ENCODE measurements at regions of chr5 and their contacts with region 1.

Region 1: DNA sequence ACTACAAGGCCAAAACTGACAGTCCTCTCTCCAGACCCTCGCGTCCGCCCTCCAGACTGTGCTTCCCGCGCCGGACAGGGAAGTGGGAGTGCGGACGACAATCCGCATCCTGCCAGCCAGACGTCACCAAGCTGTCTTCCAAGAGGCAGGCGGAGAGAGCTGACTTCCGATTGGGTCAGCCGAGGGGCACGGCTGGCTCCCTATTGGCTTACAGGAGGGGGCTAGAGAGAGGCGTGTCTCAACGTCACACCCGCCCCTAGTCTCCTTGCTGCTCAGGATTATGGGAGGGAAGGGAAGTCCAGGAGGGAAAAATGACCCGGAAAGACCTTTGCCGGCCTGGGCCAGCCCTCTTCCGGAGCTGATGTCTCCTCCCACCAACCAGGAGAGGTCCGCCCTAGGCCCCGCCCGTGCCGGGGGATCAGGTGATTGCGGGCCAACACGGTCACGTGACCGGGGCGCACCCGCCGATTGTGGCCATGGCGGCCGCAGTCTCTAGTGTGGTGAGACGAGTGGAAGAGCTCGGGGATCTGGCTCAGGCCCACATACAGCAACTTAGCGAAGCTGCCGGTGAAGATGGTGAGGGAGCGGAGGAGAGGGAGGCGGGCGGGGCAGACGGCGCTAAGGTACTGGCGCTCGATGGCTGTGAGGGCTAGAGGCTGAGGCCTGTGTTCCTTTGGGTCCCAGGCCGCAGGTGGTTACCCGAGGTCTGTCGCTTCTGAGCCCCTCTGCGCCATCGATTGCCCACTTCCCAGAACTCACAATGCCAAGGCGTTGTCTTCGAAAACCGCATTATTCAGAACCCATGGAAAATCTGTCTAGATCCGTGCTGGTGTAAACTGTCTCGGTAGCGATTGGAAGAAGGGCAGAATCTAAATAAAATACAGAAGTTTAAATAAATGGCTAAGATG is at the start of gene RIMOC1:
- DNase-seq: peak; percentile 98
- H3K4me3 Mint-ChIP-seq: peak within 1 kb of the TSS; percentile 97
- H3K27ac Mint-ChIP-seq: peak within 1 kb of the TSS; percentile 97
- H3K4me1 Mint-ChIP-seq: peaks cover 49% of the 10 kb centered on the region
- H3K27me3 Mint-ChIP-seq: no peaks in the 10 kb centered on the region
- total RNA-seq, gene RIMOC1: 26.6 and 28.7 TPM in 2 replicates

Region 2: GRCh38 chr5:41575110-41575779 is 328.9 kb before region 1 on chr5:
- intact Hi-C with region 1: no loop called
- DNase-seq: no peak
- H3K4me3 Mint-ChIP-seq: no peak overlapping the region
- H3K27ac Mint-ChIP-seq: no peak overlapping the region
- H3K4me1 Mint-ChIP-seq: no peaks in the 10 kb centered on the region
- H3K27me3 Mint-ChIP-seq: no peaks in the 10 kb centered on the region

Region 3: DNA sequence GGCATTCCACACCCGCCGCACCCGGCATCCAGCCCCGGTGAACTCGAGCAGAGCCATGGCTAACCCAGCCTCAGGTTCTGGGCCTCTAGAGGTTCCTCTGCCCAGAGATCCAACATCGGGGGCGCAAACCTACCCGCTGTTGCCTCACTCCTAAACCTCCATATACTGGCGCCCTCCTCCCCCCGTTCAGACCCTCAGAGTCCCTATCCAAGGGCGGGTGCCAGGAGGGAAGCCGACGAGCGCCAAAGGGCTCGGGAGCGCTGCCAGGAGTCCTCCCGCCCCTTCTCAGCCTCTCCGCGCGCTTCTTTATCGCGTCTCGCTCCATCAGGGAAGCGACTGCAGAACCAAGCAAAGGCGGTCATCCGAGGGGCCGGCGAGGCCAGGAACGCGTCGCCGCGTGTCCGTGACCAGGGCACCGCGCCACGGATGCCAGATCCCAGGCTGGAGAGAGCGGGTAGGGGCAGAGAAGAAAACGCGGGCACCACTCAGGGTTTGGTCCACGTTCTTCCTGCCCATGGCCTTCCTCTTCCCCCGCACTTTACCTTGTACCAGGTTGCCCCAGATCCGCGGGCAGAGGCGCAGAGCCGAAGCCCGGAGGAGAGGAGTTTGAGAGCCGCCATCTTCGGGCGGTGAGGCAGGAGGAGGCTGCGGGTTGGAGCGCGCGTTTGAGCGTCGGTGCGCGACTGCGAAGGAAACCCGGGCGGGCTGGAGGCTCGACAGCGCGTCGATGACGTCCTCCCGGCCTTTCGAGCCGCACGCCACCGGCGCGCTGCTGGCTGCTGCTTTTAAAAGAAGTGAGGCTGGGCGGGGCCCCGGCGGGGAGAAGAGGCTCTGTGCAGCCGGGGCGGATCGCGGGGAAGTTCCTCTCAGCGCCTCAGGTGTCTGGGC is 34.2 kb before region 1 on chr5 and contains the start of gene OXCT1:
- intact Hi-C with region 1: loop called (anchors 1 kb)
- DNase-seq: peak; percentile 93
- H3K4me3 Mint-ChIP-seq: peak within 1 kb of the TSS; percentile 92
- H3K27ac Mint-ChIP-seq: peak within 1 kb of the TSS; percentile 88
- H3K4me1 Mint-ChIP-seq: peaks cover 54% of the 10 kb centered on the region
- H3K27me3 Mint-ChIP-seq: no peaks in the 10 kb centered on the region
- total RNA-seq, gene OXCT1: 118 and 123 TPM in 2 replicates

Region 4: GRCh38 chr5:41893074-41893851 is 10.9 kb before region 1 on chr5:
- intact Hi-C with region 1: loop called (anchors 2 kb)
- DNase-seq: no peak
- H3K4me3 Mint-ChIP-seq: peak overlapping the region; percentile 37
- H3K27ac Mint-ChIP-seq: no peak overlapping the region
- H3K4me1 Mint-ChIP-seq: peaks cover 26% of the 10 kb centered on the region
- H3K27me3 Mint-ChIP-seq: peaks cover 21% of the 10 kb centered on the region

Region 5: DNA sequence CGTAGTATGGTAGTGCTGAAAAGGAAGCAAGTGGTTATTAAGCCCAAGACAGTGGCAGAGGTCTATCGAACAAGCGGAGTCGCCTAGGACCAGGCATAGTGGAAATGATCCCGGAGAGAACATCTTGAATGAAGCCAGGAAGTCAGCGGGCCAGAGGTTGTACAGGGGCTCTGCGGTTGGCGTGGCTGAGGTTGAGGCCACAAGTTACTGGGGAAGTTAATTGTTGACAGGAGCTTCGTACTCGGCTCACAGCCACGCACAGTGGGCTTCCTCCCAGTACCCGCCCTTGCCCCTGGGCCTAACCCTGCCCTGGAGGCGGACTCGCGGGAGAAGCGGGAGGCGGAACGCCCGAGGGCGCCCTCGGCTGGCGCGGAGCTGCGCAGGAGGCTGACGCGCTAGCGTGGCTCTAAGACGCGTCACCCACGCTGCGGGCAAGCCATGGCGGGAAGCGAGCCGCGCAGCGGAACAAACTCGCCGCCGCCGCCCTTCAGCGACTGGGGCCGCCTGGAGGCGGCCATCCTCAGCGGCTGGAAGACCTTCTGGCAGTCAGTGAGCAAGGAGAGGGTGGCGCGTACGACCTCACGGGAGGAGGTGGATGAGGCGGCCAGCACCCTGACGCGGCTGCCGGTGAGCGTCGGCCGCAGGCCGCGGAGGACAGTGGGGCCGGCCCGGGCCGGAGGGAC is 20.9 kb after region 1 on chr5 and contains the start of gene FBXO4:
- intact Hi-C with region 1: loop called (anchors 1 kb)
- DNase-seq: peak; percentile 86
- H3K4me3 Mint-ChIP-seq: peak within 1 kb of the TSS; percentile 90
- H3K27ac Mint-ChIP-seq: peak within 1 kb of the TSS; percentile 98
- H3K4me1 Mint-ChIP-seq: peaks cover 17% of the 10 kb centered on the region
- H3K27me3 Mint-ChIP-seq: no peaks in the 10 kb centered on the region
- total RNA-seq, gene FBXO4: 16.1 and 17.2 TPM in 2 replicates